IMR-90 (cell line): ENCODE measurements at regions of chr4 and their contacts with region 1.

Region 1: GRCh38 chr4:173547889-173548288 is 17.9 kb upstream of the HAND2 start:
- DNase-seq: no peak
- ATAC-seq: no peak
- H3K4me3 ChIP-seq: no peak overlapping the region
- H3K27ac ChIP-seq: no peak overlapping the region
- H3K4me1 ChIP-seq: no peaks in the 10 kb centered on the region
- H3K27me3 ChIP-seq: peaks cover 13% of the 10 kb centered on the region
- CTCF ChIP-seq: no peak
- POLR2A ChIP-seq: no peak
- RAD21 ChIP-seq: no peak

Region 2: GRCh38 chr4:173436149-173436579 is 111.7 kb before region 1 on chr4:
- CTCF ChIA-PET with region 1: no interaction called
- POLR2A ChIA-PET with region 1: no interaction called
- dilution Hi-C with region 1: no loop called
- in situ Hi-C with region 1: no loop called
- intact Hi-C with region 1: no loop called
- DNase-seq: peak; percentile 67
- ATAC-seq: peak; percentile 84
- H3K4me3 ChIP-seq: no peak overlapping the region
- H3K27ac ChIP-seq: no peak overlapping the region
- H3K4me1 ChIP-seq: peaks cover 3% of the 10 kb centered on the region; the same call in 1 of the 2 replicates
- H3K27me3 ChIP-seq: no peaks in the 10 kb centered on the region; the same call in 1 of the 2 replicates
- CTCF ChIP-seq: no peak
- POLR2A ChIP-seq: no peak
- RAD21 ChIP-seq: no peak

Region 3: GRCh38 chr4:173591760-173592159 is 43.9 kb after region 1 on chr4:
- CTCF ChIA-PET with region 1: interaction called, 4 read pairs
- POLR2A ChIA-PET with region 1: no interaction called
- dilution Hi-C with region 1: no loop called
- in situ Hi-C with region 1: no loop called
- intact Hi-C with region 1: loop called (anchors 5 kb)
- DNase-seq: no peak
- ATAC-seq: no peak
- H3K4me3 ChIP-seq: no peak overlapping the region
- H3K27ac ChIP-seq: no peak overlapping the region
- H3K4me1 ChIP-seq: no peaks in the 10 kb centered on the region
- H3K27me3 ChIP-seq: no peaks in the 10 kb centered on the region; the same call in 1 of the 2 replicates
- CTCF ChIP-seq: no peak
- POLR2A ChIP-seq: no peak
- RAD21 ChIP-seq: no peak

Region 4: DNA sequence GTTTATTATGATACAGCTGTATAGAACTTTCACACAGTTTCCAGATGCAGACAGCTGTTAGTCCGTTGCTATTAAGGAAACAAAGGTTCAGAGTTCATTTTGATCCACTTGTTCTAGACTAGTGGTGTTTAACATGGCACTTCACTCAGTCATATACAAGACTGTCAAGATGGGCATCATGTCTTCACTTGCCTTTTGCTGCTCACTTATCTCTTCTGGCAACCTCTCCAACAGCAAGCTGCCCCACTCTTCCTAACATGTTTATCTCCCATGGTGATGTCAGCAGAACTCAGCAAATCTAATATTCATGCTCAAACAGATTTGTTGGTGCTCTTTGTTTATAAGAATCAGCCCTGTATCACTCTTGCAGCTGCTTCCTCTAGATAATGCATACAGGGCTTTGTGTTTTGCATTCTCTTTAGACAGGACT is 218.3 kb after region 1 on chr4:
- CTCF ChIA-PET with region 1: no interaction called
- POLR2A ChIA-PET with region 1: no interaction called
- dilution Hi-C with region 1: no loop called
- in situ Hi-C with region 1: no loop called
- intact Hi-C with region 1: no loop called
- DNase-seq: peak; percentile 19
- ATAC-seq: peak; percentile 29; the same call in 1 of the 2 replicates
- H3K4me3 ChIP-seq: no peak overlapping the region
- H3K27ac ChIP-seq: peak overlapping the region; percentile 29; the same call in 1 of the 2 replicates
- H3K4me1 ChIP-seq: peaks cover 2% of the 10 kb centered on the region; the same call in 1 of the 2 replicates
- H3K27me3 ChIP-seq: no peaks in the 10 kb centered on the region
- CTCF ChIP-seq: no peak
- POLR2A ChIP-seq: no peak
- RAD21 ChIP-seq: no peak